HEK293 (cell line): ENCODE measurements at regions of chr2 and their contacts with region 1.

Region 1: GRCh38 chr2:233857511-233858141 is 3.3 kb upstream of the HJURP start:
- H3K4me3 ChIP-seq: no peak overlapping the region
- H3K27ac ChIP-seq: no peak overlapping the region
- H3K4me1 ChIP-seq: no peaks in the 10 kb centered on the region
- CTCF ChIP-seq: peak; percentile 59

Region 2: GRCh38 chr2:233711312-233712008 is 146.2 kb before region 1 on chr2:
- CTCF ChIA-PET with region 1: no interaction called
- POLR2A ChIA-PET with region 1: no interaction called
- H3K4me3 ChIP-seq: no peak overlapping the region
- H3K27ac ChIP-seq: no peak overlapping the region
- H3K4me1 ChIP-seq: no peaks in the 10 kb centered on the region
- CTCF ChIP-seq: peak; percentile 65

Region 3: DNA sequence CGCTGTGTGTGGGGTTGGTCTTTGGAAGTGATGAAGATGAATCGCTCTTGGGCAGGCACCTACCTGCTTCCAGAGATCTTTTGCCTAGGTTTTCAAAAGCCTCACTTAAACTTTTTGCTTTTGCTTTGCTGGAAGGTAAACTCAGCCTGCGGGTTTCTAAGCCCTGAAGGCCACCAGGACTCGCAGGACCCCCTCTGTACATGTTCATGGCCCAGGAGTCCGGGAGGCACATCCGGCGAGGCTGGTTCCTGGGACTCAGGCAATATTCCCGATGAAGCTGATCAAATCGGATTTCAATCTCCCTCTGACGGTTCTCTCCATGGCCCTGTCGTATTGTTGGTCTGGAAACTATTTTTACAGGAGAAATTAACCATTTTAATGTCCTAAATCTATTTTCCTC is 16.4 kb before region 1 on chr2:
- CTCF ChIA-PET with region 1: interaction called, 11 read pairs
- POLR2A ChIA-PET with region 1: interaction called, 6 read pairs
- H3K4me3 ChIP-seq: no peak overlapping the region
- H3K27ac ChIP-seq: no peak overlapping the region
- H3K4me1 ChIP-seq: no peaks in the 10 kb centered on the region
- CTCF ChIP-seq: no peak

Region 4: GRCh38 chr2:233867993-233868532 is 10.4 kb after region 1 on chr2 and contains the start of gene MSL3B:
- CTCF ChIA-PET with region 1: interaction called, 18 read pairs
- POLR2A ChIA-PET with region 1: interaction called, 6 read pairs
- H3K4me3 ChIP-seq: peak within 1 kb of the TSS; percentile 36
- H3K27ac ChIP-seq: peak within 1 kb of the TSS; percentile 1; the same call in 1 of the 2 replicates
- H3K4me1 ChIP-seq: no peaks in the 10 kb centered on the region
- CTCF ChIP-seq: no peak